CD14-positive monocyte (primary cell): ENCODE measurements at regions of chr6 and their contacts with region 1.

Region 1: DNA sequence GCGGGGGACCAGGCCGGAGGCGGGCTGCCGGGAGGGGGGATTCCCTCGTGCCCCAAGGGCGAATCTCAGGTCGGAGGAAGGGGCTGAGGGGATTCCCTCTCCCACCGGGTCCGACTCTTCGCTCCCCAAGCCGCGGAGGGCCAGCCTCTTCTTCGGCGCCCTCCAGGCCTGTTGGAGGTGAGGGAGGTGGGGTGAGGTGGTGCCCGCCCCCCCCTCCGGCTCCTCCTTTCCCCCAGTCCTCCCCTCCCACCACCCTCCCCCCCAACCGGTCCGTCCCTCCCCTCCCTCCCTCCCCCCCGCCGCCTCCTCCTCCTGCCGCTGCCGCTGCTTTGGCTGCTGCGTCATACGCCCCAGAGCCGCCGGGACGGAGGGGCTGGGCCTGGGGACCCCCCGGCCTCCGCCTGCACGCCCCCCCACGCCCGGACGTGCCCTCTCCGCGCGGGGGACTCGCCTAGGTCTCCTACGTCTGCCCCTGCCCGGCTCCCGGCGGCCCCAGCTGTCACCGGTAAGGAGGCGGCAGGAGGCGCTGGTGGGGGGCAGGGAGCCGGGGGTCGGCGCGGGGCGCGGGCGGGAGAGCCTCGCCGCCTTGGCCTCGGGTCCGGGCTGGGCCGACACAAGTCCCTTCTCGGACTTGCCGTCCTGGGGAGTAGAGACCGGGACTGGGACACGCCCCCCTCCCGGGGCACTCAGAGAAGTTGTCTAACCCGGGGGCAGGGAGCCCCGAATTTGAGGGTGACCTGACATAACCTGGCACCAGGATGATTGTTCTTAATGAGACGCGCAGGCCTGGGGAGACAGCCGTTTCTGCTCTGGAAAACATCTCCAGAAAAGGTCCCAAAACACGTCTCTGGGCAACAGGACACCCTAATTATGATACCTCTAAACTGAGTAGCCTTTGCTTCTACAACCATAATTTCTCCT is at the start of gene PHF1:
- DNase-seq: no peak
- H3K4me3 ChIP-seq: peak within 1 kb of the TSS; percentile 68 to 94 (median 69)
- H3K4me3 Mint-ChIP-seq: peak within 1 kb of the TSS; percentile 82 to 95
- H3K27ac ChIP-seq: peak within 1 kb of the TSS; percentile 81 to 89
- H3K27ac Mint-ChIP-seq: peak within 1 kb of the TSS; percentile 94 to 97 (median 95)
- H3K4me1 ChIP-seq: peaks cover 12 to 37% of the 10 kb centered on the region in 2 donors
- H3K4me1 Mint-ChIP-seq: peaks cover 28% of the 10 kb centered on the region
- H3K27me3 ChIP-seq: no peaks in the 10 kb centered on the region
- H3K27me3 Mint-ChIP-seq: peaks cover 0 to 2% (median 0%) of the 10 kb centered on the region in 3 donors
- CTCF ChIP-seq: peak; percentile 9
- polyA plus RNA-seq, gene PHF1: 3.0 to 90.2 (median 3.5) TPM

Region 2: DNA sequence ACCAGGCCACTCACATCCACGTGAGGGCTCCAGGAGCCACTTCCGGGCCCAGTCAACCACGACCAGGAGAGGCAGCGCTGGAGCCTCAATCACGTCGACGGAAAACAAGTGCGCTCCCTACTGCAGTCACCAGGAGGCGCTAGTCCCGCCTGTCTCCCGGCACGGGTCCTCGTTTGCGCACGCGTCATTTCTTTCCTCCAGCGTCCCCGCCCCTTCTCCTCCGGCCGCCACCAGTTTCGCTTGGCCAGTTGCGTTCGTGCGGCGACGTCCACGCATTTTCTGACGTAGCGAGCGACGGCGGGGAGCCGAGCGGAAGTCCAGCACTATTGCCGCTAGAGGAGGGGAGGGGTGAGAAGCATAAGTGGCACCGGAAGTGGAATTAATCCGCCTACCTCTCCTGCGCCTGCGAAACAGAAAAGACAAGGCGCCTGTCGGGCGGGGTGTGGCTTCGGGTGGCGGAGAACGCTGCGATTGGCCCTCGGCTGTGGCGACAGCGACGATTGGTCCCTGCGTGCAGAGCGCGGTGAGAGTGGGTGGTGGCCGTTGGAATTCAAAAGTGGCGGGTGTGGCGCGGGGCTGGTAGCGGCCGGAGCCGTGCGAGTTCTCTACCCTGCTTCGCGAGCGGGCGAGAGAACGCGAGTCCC is 19.6 kb before region 1 on chr6 and contains the start of gene KIFC1:
- intact Hi-C with region 1: loop called in 1 of 2 experiments (anchors 1 kb)
- DNase-seq: peak; percentile 99 to 100 (median 100)
- H3K4me3 ChIP-seq: peak within 1 kb of the TSS; percentile 71 to 89 (median 74)
- H3K4me3 Mint-ChIP-seq: peak within 1 kb of the TSS; percentile 80 to 87
- H3K27ac ChIP-seq: peak within 1 kb of the TSS; percentile 72 to 78
- H3K27ac Mint-ChIP-seq: peak within 1 kb of the TSS; percentile 85 to 95 (median 94)
- H3K4me1 ChIP-seq: peaks cover 26 to 31% of the 10 kb centered on the region in 2 donors
- H3K4me1 Mint-ChIP-seq: peaks cover 39% of the 10 kb centered on the region
- H3K27me3 ChIP-seq: no peaks in the 10 kb centered on the region
- H3K27me3 Mint-ChIP-seq: peaks cover 0 to 1% (median 0%) of the 10 kb centered on the region in 3 donors
- CTCF ChIP-seq: peak; percentile 94
- polyA plus RNA-seq, gene KIFC1: 0.14 to 0.87 (median 0.68) TPM

Region 3: DNA sequence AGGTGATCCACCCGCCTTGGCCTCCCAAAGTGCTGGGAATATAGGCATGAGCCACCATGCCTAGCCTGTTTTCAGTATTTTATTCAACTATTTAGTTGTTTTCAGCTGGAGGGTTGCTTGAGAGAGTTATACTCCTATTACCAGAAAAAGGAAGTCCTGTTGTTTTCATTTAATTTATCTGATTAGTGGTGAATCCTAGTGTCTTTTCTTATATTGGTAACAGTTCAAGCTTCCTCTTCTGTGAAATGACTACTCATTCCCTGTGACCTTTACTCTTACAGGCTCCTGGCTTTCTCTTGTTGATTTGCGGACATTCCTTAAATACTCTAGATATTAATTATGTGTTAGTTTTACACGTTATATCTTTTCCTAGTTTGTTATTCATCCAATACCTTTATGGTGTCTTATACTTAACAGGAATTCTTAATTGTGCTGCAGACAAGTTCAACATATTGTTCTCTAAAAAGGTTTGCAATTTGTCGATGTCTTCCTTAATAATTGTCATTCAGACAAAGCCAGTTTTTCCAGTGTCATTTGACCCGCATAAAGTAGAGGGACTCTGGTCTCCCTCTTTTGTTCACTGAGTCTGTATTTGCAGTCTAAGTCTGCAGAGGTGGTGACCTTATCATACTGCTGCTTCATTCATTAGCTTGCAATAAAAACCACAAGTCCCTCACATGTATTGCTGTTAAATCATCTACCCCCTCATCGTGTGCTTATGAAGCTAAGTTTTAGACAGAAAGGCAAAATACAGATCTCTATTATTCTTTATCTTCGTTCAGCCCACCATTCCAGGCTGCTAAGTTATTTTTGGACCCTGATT is 94.8 kb after region 1 on chr6:
- intact Hi-C with region 1: no loop called
- DNase-seq: no peak
- H3K4me3 ChIP-seq: no peak overlapping the region
- H3K4me3 Mint-ChIP-seq: no peak overlapping the region
- H3K27ac ChIP-seq: no peak overlapping the region
- H3K27ac Mint-ChIP-seq: no peak overlapping the region
- H3K4me1 ChIP-seq: peaks cover 14 to 15% of the 10 kb centered on the region in 2 donors
- H3K4me1 Mint-ChIP-seq: peaks cover 19% of the 10 kb centered on the region
- H3K27me3 ChIP-seq: no peaks in the 10 kb centered on the region
- H3K27me3 Mint-ChIP-seq: peaks cover 0 to 2% (median 0%) of the 10 kb centered on the region in 3 donors
- CTCF ChIP-seq: no peak